ENCODE measurements at regions of chr2 and their contacts with region 1.

Region 1: DNA sequence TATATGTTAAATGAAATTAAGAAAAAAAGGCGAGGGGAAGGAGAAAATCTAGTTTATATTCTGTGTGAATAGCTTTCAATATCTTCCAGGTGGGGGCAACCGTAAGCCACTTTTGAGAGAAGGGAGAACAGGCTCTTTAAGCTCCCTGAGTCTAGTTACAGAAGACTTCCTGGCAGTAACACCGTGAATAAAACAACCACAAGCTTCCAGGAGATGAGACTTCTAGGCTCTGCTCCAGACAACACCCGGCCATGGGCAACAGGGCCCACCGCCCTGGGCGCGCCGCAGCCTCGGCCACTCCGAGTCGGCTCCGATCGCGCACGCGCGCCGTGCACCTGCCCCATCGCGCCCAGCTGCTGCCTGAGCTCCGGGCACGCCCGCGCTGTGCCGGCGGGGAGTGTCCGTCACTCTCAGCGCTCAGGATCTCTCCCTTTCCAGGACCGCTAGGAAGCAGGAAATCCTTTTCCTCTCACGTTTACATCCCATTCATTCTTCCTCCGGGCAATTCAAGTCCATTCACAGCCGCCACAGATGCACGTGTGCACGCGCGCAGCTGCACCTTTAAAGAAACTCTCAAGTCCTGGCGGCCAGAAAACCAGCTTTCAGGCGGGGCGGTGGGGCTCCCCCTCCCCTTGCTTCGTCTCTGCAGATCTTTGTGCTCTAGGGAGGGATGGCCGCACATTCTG is 19.4 kb upstream of the PAX3 start:
- DNase-seq: peak in 3 of 5 donors; percentile 49 to 75 (median 75)
- ATAC-seq: peak; percentile 43 to 85 (median 79)
- H3K4me3 ChIP-seq: peak overlapping the region; percentile 13 to 68 (median 50)
- H3K27ac ChIP-seq: peak overlapping the region in 2 of 12 donors; percentile 17 to 29
- H3K4me1 ChIP-seq: peaks cover 0 to 21% (median 8%) of the 10 kb centered on the region in 12 donors
- H3K27me3 ChIP-seq: peaks cover 3 to 79% (median 23%) of the 10 kb centered on the region in 9 donors
- CTCF ChIP-seq: peak in 11 of 12 donors; percentile 18 to 68 (median 54)
- POLR2A ChIP-seq: no peak

Region 2: GRCh38 chr2:222064286-222064685 is 253.9 kb before region 1 on chr2:
- intact Hi-C with region 1: loop called in 4 of 10 experiments (anchors 5 to 10 kb)
- DNase-seq: no peak
- ATAC-seq: no peak
- H3K4me3 ChIP-seq: no peak overlapping the region
- H3K27ac ChIP-seq: no peak overlapping the region
- H3K4me1 ChIP-seq: no peaks in the 10 kb centered on the region
- H3K27me3 ChIP-seq: peaks cover 0 to 21% (median 0%) of the 10 kb centered on the region in 9 donors
- CTCF ChIP-seq: no peak
- POLR2A ChIP-seq: no peak

Region 3: DNA sequence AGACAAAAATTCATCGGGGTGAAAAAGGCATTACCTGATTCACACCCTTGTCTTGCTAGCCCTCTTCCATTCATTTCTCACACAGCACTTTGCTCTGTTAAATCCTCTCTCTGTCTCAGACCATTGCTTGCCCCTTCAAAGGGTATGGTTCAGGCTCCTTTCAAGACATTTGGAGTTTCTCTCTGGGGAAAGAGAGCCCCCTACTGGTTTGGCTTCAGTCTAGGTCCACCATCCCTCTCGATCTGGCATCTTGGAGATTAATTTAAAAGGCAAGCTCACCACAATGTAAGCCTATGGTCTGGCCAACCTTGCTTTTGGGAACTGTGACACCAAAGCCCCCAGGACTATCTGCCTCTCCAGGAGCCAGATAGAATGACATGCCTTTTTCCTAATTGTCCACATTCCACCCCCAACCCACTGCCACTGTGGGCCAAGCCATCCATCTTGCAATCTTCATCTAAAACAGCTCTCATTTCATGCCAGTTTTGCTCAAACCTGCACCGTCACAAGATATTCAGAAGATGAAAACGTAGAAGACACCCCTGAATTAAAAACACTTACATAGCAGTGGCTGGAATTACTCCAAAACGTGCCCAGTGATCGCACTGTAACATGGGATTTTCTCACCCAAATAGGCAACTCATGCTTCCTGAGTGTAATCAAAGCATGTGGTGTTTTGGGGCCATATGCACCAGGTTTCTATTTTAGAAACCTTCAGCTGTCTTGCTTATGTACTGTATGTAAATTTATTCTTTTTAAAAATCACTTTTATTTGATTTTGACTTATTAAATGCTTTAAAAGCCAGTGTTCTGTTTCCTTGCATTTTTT is 243.9 kb after region 1 on chr2:
- intact Hi-C with region 1: loop called (anchors 1 to 5 kb)
- DNase-seq: peak in 2 of 5 donors; percentile 29 to 40
- ATAC-seq: peak; percentile 38 to 83 (median 80)
- H3K4me3 ChIP-seq: no peak overlapping the region
- H3K27ac ChIP-seq: no peak overlapping the region
- H3K4me1 ChIP-seq: peaks cover 0 to 11% (median 0%) of the 10 kb centered on the region in 12 donors
- H3K27me3 ChIP-seq: peaks cover 0 to 2% (median 0%) of the 10 kb centered on the region in 9 donors
- CTCF ChIP-seq: peak; percentile 52 to 68 (median 58)
- POLR2A ChIP-seq: no peak